Uterus (tissue), 4 donors: ENCODE measurements at regions of chr1 and their contacts with region 1.

Region 1: GRCh38 chr1:119286587-119287181 is 81.9 kb upstream of the HAO2 start:
- DNase-seq: no peak
- H3K4me3 ChIP-seq: no peak overlapping the region
- H3K27ac ChIP-seq: no peak overlapping the region
- H3K4me1 ChIP-seq: no peaks in the 10 kb centered on the region
- H3K27me3 ChIP-seq: no peaks in the 10 kb centered on the region
- CTCF ChIP-seq: peak; percentile 12 to 42 (median 32)
- POLR2A ChIP-seq: no peak

Region 2: DNA sequence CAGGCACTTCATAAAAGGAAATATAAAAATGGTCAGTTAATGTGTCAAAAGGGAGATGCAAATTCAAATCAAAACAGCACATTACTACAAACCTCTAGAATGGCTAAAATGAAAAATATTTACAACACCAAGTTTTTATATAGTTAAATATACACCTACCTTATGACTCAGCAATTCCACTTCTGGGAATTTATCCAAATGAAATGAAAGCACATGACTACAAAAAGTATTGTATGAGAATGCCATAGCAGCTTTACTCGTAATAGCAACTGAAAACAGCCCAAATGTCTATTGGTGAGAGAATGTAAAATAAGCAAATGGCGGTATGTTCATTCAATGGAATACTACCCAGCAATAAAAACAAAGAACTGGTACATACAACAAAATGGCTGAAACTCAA is 925.9 kb before region 1 on chr1:
- intact Hi-C with region 1: no loop called
- DNase-seq: no peak
- H3K4me3 ChIP-seq: no peak overlapping the region
- H3K27ac ChIP-seq: no peak overlapping the region
- H3K4me1 ChIP-seq: no peaks in the 10 kb centered on the region
- H3K27me3 ChIP-seq: no peaks in the 10 kb centered on the region
- CTCF ChIP-seq: no peak
- POLR2A ChIP-seq: no peak

Region 3: GRCh38 chr1:119140177-119141019 is 146.3 kb before region 1 on chr1 and contains the start of gene WARS2:
- intact Hi-C with region 1: no loop called
- DNase-seq: peak; percentile 94 to 97
- H3K4me3 ChIP-seq: peak within 1 kb of the TSS; percentile 67 to 78
- H3K27ac ChIP-seq: peak within 1 kb of the TSS; percentile 99
- H3K4me1 ChIP-seq: peaks cover 0 to 8% of the 10 kb centered on the region in 2 donors
- H3K27me3 ChIP-seq: no peaks in the 10 kb centered on the region
- CTCF ChIP-seq: peak in 1 of 4 experiments; percentile 12
- POLR2A ChIP-seq: peak; percentile 54 to 73
- total RNA-seq, gene WARS2: 13.5 to 22.6 (median 18.5) TPM

Region 4: GRCh38 chr1:119367427-119368124 is 80.9 kb after region 1 on chr1:
- intact Hi-C with region 1: loop called (anchors 10 kb)
- DNase-seq: no peak
- H3K4me3 ChIP-seq: no peak overlapping the region
- H3K27ac ChIP-seq: no peak overlapping the region
- H3K4me1 ChIP-seq: no peaks in the 10 kb centered on the region
- H3K27me3 ChIP-seq: no peaks in the 10 kb centered on the region
- CTCF ChIP-seq: peak; percentile 84 to 88 (median 86)
- POLR2A ChIP-seq: no peak

Region 5: DNA sequence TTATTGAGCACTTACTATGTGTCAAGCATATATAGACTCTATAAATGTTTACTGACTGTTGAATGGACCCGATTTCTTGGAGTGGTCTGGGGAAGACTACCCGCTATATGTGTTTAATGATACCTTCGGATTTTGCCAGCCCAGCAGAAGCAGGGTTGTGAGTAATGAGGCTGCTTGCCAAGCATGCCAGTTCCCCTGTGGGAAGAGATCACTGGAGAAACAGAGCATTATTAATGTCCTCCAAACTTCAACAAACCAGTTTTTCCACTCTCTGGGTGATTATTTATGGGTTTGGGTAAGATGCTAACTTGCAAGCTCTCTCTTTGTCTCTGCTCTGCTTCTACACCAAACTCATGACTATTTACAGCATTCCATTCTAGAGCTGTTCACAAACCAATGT is 400.0 kb after region 1 on chr1:
- intact Hi-C with region 1: no loop called
- DNase-seq: no peak
- H3K4me3 ChIP-seq: no peak overlapping the region
- H3K27ac ChIP-seq: no peak overlapping the region
- H3K4me1 ChIP-seq: no peaks in the 10 kb centered on the region
- H3K27me3 ChIP-seq: no peaks in the 10 kb centered on the region
- CTCF ChIP-seq: no peak
- POLR2A ChIP-seq: no peak